ENCODE measurements at regions of chr4 and their contacts with region 1.

Region 1: DNA sequence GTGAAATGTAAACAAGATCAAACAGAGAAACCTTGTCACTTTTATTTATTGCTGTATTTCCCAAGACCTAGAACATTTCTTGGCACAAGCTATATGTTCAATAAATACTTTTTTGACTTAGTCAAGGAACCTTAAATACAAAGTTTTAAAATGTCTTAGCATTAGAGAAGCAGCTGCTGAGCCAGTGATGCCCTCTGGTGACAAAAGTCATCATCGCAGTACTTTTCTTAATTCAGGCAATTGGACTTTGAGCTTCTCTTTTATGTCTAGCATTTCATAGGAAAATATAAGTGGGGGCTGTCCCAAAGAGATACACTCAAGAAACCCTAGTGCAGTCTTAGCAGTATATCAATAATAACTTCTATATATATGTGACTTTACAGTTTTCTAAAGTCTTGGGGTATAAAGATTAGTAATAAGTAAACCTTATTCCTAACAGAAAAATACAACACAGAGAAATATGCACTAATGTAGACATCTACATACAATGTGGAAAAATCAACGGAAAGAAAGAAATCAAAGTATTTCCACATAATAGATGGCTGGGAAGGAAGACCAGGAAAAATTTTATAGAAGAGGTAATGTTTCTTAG is 118.4 kb downstream of the DTHD1 start:
- DNase-seq: peak; percentile 2
- ATAC-seq: no peak
- H3K4me3 ChIP-seq: no peak overlapping the region
- H3K27ac ChIP-seq: no peak overlapping the region
- H3K4me1 ChIP-seq: no peaks in the 10 kb centered on the region
- H3K27me3 ChIP-seq: no peaks in the 10 kb centered on the region
- CTCF ChIP-seq: peak; percentile 35
- EP300 ChIP-seq: no peak
- POLR2A ChIP-seq: no peak
- RAD21 ChIP-seq: no peak

Region 2: GRCh38 chr4:36351082-36351666 is 48.7 kb before region 1 on chr4:
- CTCF ChIA-PET with region 1: no interaction called
- POLR2A ChIA-PET with region 1: no interaction called
- in situ Hi-C with region 1: loop called (anchors 5 kb)
- intact Hi-C with region 1: loop called (anchors 1 kb)
- DNase-seq: peak; percentile 19
- ATAC-seq: peak; percentile 68
- H3K4me3 ChIP-seq: no peak overlapping the region
- H3K27ac ChIP-seq: no peak overlapping the region
- H3K4me1 ChIP-seq: no peaks in the 10 kb centered on the region
- H3K27me3 ChIP-seq: no peaks in the 10 kb centered on the region
- CTCF ChIP-seq: peak; percentile 62
- EP300 ChIP-seq: no peak
- POLR2A ChIP-seq: no peak
- RAD21 ChIP-seq: no peak